CD14-positive monocyte (primary cell): ENCODE measurements at regions of chr7 and their contacts with region 1.

Region 1: GRCh38 chr7:30564243-30564892 is 30.3 kb upstream of the GARS1 start:
- DNase-seq: peak; percentile 58 to 72 (median 64)
- H3K4me3 ChIP-seq: no peak overlapping the region
- H3K4me3 Mint-ChIP-seq: no peak overlapping the region
- H3K27ac ChIP-seq: peak overlapping the region in 1 of 2 donors; percentile 59
- H3K27ac Mint-ChIP-seq: peak overlapping the region in 6 of 7 donors; percentile 3 to 80 (median 67)
- H3K4me1 ChIP-seq: no peaks in the 10 kb centered on the region
- H3K4me1 Mint-ChIP-seq: no peaks in the 10 kb centered on the region
- H3K27me3 ChIP-seq: no peaks in the 10 kb centered on the region
- H3K27me3 Mint-ChIP-seq: no peaks in the 10 kb centered on the region
- CTCF ChIP-seq: peak; percentile 79

Region 2: DNA sequence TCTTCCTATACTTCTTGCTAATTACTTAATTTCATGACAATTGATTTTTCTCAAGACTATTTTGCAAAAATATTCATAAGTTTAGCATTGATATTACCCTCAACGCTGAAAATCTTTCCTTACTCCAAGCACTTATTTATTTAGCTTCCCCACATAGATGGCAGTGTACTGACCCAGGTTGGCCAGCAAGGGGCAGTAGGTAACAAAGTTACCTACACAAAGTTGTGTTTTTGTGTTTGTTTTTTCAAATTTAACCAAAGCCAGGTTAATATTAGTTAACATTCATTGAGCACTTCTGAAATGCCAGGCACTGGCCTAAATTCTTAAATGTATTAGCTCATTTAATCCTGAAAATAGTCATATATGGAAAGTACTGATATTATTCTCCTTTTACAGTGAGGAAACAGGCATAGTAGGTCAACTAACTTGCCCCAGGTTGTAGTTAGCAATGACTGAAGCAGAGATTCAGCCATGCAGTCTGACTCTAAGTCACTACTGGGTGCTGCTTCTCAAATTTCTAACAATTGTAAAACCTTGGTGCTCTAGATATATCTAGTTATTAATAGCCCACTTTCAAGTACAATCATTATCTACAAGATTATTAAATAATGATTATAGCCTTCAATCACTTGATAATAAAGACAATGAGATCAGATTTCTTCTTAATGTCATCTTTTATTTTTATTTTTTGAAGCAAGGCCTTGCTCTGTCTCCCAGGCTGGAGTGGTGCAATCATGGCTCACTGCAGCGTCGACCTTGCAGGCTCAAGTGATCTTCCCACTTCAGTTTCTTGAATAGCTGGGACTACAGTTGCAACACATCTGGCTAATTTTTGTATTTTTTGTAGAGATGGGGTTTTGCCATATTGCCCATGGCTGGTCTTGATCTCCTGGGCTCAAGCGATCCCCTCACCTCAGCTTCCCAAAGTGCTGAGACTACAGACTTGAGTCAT is 54.0 kb before region 1 on chr7:
- intact Hi-C with region 1: loop called (anchors 2 to 5 kb)
- DNase-seq: peak; percentile 29 to 47 (median 45)
- H3K4me3 ChIP-seq: no peak overlapping the region
- H3K4me3 Mint-ChIP-seq: no peak overlapping the region
- H3K27ac ChIP-seq: no peak overlapping the region
- H3K27ac Mint-ChIP-seq: no peak overlapping the region
- H3K4me1 ChIP-seq: peaks cover 2% of the 10 kb centered on the region in 2 donors
- H3K4me1 Mint-ChIP-seq: peaks cover 9% of the 10 kb centered on the region
- H3K27me3 ChIP-seq: no peaks in the 10 kb centered on the region
- H3K27me3 Mint-ChIP-seq: peaks cover 0 to 1% (median 0%) of the 10 kb centered on the region in 3 donors
- CTCF ChIP-seq: peak; percentile 93

Region 3: GRCh38 chr7:30642789-30643188 is 78.4 kb after region 1 on chr7:
- intact Hi-C with region 1: no loop called
- DNase-seq: no peak
- H3K4me3 ChIP-seq: no peak overlapping the region
- H3K4me3 Mint-ChIP-seq: no peak overlapping the region
- H3K27ac ChIP-seq: no peak overlapping the region
- H3K27ac Mint-ChIP-seq: no peak overlapping the region
- H3K4me1 ChIP-seq: no peaks in the 10 kb centered on the region
- H3K4me1 Mint-ChIP-seq: no peaks in the 10 kb centered on the region
- H3K27me3 ChIP-seq: no peaks in the 10 kb centered on the region
- H3K27me3 Mint-ChIP-seq: peaks cover 0 to 1% (median 0%) of the 10 kb centered on the region in 3 donors
- CTCF ChIP-seq: no peak

Region 4: DNA sequence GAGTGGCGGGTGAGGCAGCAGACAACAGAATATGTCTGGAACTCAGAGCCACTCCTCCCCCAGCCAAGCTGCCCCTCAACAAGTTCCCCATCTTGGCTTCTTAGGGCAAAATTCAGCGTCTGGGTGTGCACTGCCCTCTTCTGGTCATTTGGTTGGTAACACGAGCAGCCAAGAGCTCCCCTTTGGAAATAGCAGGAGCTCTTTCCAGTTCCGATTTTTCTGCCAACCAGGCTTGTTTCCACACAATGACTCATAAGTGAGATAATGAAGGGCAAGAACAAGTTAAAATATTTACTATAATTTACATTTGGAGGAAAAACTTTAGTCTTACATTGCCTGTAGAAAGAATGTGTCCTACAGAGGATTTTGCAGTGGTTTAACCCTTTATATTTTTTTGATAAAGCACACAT is 558.3 kb after region 1 on chr7:
- intact Hi-C with region 1: no loop called
- DNase-seq: peak; percentile 37 to 65 (median 51)
- H3K4me3 ChIP-seq: no peak overlapping the region
- H3K4me3 Mint-ChIP-seq: no peak overlapping the region
- H3K27ac ChIP-seq: no peak overlapping the region
- H3K27ac Mint-ChIP-seq: no peak overlapping the region
- H3K4me1 ChIP-seq: no peaks in the 10 kb centered on the region
- H3K4me1 Mint-ChIP-seq: no peaks in the 10 kb centered on the region
- H3K27me3 ChIP-seq: no peaks in the 10 kb centered on the region
- H3K27me3 Mint-ChIP-seq: peaks cover 7 to 11% (median 10%) of the 10 kb centered on the region in 3 donors
- CTCF ChIP-seq: peak; percentile 75